ENCODE measurements at regions of chr12 and their contacts with region 1.

Region 1: DNA sequence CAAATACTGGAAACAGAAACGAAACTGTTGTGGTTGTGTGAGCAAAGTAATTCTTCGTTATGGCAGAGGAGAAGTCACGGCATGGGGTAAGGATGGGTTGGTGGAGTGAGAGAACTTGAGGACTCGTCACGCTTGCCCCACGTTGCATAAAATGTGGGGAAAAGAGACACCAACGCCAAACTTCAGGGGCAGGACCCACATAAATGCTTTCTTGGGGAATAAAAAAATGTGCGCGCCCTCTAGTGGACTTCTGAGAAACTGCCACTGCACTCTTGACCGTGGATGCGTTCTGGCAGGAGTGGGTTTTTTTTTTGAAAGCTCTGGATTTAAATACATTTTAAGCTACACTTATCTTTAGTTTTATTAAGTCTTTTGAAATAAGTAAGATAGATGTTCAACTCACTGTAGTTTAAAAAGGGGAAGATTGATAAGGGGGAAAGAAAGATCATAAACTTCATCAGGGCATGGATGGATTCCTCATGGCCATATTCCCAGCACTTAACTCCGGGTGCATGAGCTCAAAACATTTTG is 4.1 kb upstream of the IGF1 start:
- DNase-seq: peak; percentile 42
- H3K4me3 Mint-ChIP-seq: peak overlapping the region; percentile 73
- H3K27ac Mint-ChIP-seq: peak overlapping the region; percentile 92
- H3K4me1 Mint-ChIP-seq: peaks cover 33% of the 10 kb centered on the region
- H3K27me3 Mint-ChIP-seq: no peaks in the 10 kb centered on the region

Region 2: DNA sequence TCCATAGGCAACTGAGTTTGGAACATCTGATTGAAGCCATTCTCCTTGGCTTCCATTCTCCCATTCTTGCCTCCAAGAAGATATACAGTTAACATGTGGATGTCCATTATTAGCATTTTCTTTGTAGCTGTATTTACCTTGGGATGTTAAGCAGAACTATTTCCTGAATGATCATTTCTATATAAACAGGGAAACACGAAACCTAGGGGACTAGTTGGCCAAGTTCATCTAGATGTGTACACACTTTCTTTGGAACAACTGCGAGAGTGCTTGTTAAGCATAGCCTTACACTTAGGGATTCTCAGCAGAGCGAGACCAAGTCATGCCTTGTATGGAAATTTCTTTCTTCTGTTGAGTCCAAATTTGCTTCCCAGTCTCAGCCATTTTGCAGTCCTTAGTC is 565.0 kb before region 1 on chr12:
- intact Hi-C with region 1: loop called (anchors 1 kb)
- DNase-seq: no peak
- H3K4me3 Mint-ChIP-seq: no peak overlapping the region
- H3K27ac Mint-ChIP-seq: no peak overlapping the region
- H3K4me1 Mint-ChIP-seq: peaks cover 10% of the 10 kb centered on the region
- H3K27me3 Mint-ChIP-seq: peaks cover 2% of the 10 kb centered on the region

Region 3: GRCh38 chr12:102095675-102096263 is 388.7 kb before region 1 on chr12:
- intact Hi-C with region 1: loop called (anchors 1 kb)
- DNase-seq: no peak
- H3K4me3 Mint-ChIP-seq: no peak overlapping the region
- H3K27ac Mint-ChIP-seq: no peak overlapping the region
- H3K4me1 Mint-ChIP-seq: peaks cover 16% of the 10 kb centered on the region
- H3K27me3 Mint-ChIP-seq: no peaks in the 10 kb centered on the region

Region 4: GRCh38 chr12:102197789-102198188 is 286.7 kb before region 1 on chr12 and contains the start of gene PMCH:
- intact Hi-C with region 1: loop called (anchors 2 kb)
- DNase-seq: no peak
- H3K4me3 Mint-ChIP-seq: peak within 1 kb of the TSS; percentile 2
- H3K27ac Mint-ChIP-seq: peak within 1 kb of the TSS; percentile 75
- H3K4me1 Mint-ChIP-seq: peaks cover 20% of the 10 kb centered on the region
- H3K27me3 Mint-ChIP-seq: no peaks in the 10 kb centered on the region
- total RNA-seq, gene PMCH: 3.1 and 4.3 TPM in 2 replicates

Region 5: DNA sequence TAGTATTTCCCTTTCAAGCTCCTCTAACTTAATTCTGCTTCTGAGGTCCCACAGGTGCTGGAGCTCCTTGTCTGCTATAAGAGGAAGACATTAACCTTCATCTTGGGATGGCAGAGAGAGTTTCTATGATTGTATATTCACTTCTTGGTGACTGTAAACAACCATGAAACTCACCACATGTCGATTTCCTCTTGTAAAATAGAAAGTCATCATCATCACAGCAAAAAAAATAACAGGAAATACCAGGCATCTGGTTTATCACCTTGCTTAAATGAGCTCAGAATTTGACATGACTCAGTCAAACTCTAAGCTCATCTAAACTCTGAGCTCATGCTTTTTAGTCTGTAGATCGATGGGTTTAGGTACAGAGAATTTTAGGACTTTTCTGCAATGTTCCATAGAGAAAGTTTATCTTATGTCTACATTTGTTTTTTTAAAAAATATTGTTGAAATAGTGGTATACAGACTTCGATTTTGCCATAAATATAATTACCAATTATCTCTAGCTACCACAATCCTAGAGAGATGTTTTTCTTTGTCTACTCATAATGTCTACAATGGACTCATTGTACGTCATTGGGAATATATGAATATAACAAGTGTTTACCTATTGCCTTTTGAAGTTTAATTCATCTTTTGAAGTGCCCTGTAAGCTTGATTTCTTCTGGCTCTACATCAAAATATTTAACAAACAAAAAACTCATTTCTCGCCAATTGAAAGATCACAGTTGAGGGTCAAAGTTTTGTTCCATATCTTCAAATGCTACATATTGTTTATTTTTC is 62.5 kb before region 1 on chr12:
- intact Hi-C with region 1: loop called (anchors 1 kb)
- DNase-seq: no peak
- H3K4me3 Mint-ChIP-seq: no peak overlapping the region
- H3K27ac Mint-ChIP-seq: peak overlapping the region; percentile 78
- H3K4me1 Mint-ChIP-seq: peaks cover 15% of the 10 kb centered on the region
- H3K27me3 Mint-ChIP-seq: peaks cover 6% of the 10 kb centered on the region

Region 6: GRCh38 chr12:102896067-102896466 is 411.6 kb after region 1 on chr12:
- intact Hi-C with region 1: no loop called
- DNase-seq: no peak
- H3K4me3 Mint-ChIP-seq: no peak overlapping the region
- H3K27ac Mint-ChIP-seq: no peak overlapping the region
- H3K4me1 Mint-ChIP-seq: no peaks in the 10 kb centered on the region
- H3K27me3 Mint-ChIP-seq: peaks cover 2% of the 10 kb centered on the region

Region 7: GRCh38 chr12:103495479-103496456 is 1011.3 kb after region 1 on chr12 and contains the start of gene C12orf42:
- intact Hi-C with region 1: loop called (anchors 2 kb)
- DNase-seq: peak; percentile 16
- H3K4me3 Mint-ChIP-seq: peak within 1 kb of the TSS; percentile 70
- H3K27ac Mint-ChIP-seq: peak within 1 kb of the TSS; percentile 53
- H3K4me1 Mint-ChIP-seq: peaks cover 27% of the 10 kb centered on the region
- H3K27me3 Mint-ChIP-seq: peaks cover 28% of the 10 kb centered on the region
- total RNA-seq, gene C12orf42: not detected in 2 replicates

Measured in activated T-helper 1 cell treated with anti-CD3 and anti-CD28 coated beads, Interleukin-12 subunit alpha, Interleukin-12 subunit beta, Interleukin-2, Interleukin-4 antibody, amounts not matched to agents 30 ng/mL and 10 ng/mL and 1 ng/mL, durations not matched to agents 14 hours and 24 hours and 36 hours (primary cell).